Naive thymus-derived CD4-positive, alpha-beta T cell (primary cell): ENCODE measurements at regions of chr2 and their contacts with region 1.

Region 1: GRCh38 chr2:171416009-171416926 is 17.5 kb downstream of the METTL8 start:
- DNase-seq: peak; percentile 29 to 82 (median 75)
- ATAC-seq: peak; percentile 99
- H3K4me3 ChIP-seq: no peak overlapping the region
- H3K4me3 Mint-ChIP-seq: no peak overlapping the region
- H3K27ac ChIP-seq: no peak overlapping the region
- H3K27ac Mint-ChIP-seq: peak overlapping the region; percentile 4 to 74 (median 55)
- H3K4me1 ChIP-seq: no peaks in the 10 kb centered on the region
- H3K4me1 Mint-ChIP-seq: peaks cover 6 to 22% (median 7%) of the 10 kb centered on the region in 7 donors
- H3K27me3 ChIP-seq: no peaks in the 10 kb centered on the region
- H3K27me3 Mint-ChIP-seq: no peaks in the 10 kb centered on the region

Region 2: DNA sequence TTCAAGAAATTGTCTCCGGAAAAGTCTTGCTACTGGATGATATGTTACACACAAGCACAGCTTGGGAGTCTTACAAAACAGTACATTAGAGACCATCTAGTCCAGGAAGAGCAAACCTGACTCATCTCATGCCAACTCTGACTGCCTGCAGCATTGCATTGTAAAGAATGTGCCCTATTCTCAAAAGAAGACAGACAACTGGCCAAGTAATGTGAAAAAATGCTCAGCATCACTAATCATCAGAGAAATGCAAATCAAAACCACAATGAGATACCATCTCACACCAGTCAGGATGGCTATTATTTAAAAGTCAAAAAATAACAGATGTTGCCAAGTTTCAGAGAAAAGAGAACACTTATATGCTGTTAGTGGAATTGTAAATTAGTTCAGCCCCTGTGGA is 529.9 kb before region 1 on chr2:
- CTCF ChIA-PET with region 1: no interaction called
- POLR2A ChIA-PET with region 1: no interaction called
- intact Hi-C with region 1: no loop called
- DNase-seq: no peak
- ATAC-seq: no peak
- H3K4me3 ChIP-seq: no peak overlapping the region
- H3K4me3 Mint-ChIP-seq: no peak overlapping the region
- H3K27ac ChIP-seq: no peak overlapping the region
- H3K27ac Mint-ChIP-seq: no peak overlapping the region
- H3K4me1 ChIP-seq: no peaks in the 10 kb centered on the region
- H3K4me1 Mint-ChIP-seq: peaks cover 0 to 1% (median 0%) of the 10 kb centered on the region in 7 donors
- H3K27me3 ChIP-seq: no peaks in the 10 kb centered on the region
- H3K27me3 Mint-ChIP-seq: peaks cover 0 to 45% (median 11%) of the 10 kb centered on the region in 5 donors

Region 3: GRCh38 chr2:170966648-170967436 is 449.4 kb before region 1 on chr2:
- CTCF ChIA-PET with region 1: interaction called, 56 read pairs
- POLR2A ChIA-PET with region 1: interaction called, 4 read pairs
- intact Hi-C with region 1: loop called in 1 of 2 experiments (anchors 1 kb)
- DNase-seq: no peak
- ATAC-seq: peak; percentile 47
- H3K4me3 ChIP-seq: no peak overlapping the region
- H3K4me3 Mint-ChIP-seq: no peak overlapping the region
- H3K27ac ChIP-seq: no peak overlapping the region
- H3K27ac Mint-ChIP-seq: peak overlapping the region in 3 of 9 donors; percentile 8 to 42 (median 20)
- H3K4me1 ChIP-seq: no peaks in the 10 kb centered on the region
- H3K4me1 Mint-ChIP-seq: no peaks in the 10 kb centered on the region
- H3K27me3 ChIP-seq: no peaks in the 10 kb centered on the region
- H3K27me3 Mint-ChIP-seq: no peaks in the 10 kb centered on the region

Region 4: DNA sequence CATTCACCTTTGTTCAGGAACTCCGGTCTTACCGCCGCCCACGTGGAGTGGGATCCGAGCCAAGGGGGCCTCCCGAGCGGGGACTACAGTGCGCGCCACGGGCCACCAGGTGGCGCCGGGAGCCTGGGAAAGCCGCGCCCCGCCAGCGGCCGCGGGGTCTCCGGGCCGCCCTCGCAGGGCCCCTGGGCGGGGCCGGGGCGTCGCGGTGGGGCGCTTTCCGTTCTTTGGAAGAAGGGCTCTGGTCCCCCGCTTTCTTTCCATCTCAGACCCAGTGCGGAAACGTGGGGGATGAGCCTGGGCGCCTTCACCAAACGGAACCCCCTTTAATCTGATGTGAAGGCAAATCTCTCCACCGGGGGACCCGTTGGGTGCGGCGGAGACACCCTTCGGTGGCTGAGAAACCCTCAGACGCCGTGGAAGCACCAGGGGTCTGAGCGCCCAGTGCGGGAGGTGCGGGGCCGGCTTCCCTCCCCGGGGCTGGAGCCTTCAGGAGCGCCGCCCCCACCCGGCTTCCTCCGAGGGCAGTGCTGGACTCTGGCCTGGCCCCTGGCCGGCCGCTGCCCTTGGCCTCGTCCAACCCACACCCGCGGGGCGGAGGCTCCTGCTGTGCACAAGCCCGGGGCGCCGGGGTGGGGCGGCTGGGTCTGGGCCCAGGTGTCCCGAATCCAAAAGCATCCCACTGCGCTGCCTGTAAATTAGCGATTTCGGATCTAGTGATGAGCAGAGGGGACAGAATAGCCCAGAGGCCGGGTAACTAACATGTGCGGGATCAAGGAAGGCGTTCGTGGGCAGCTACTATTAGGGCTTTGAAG is 442.6 kb before region 1 on chr2:
- CTCF ChIA-PET with region 1: interaction called, 56 read pairs
- POLR2A ChIA-PET with region 1: interaction called, 14 read pairs
- intact Hi-C with region 1: loop called (anchors 1 kb)
- DNase-seq: peak; percentile 86 to 96 (median 91)
- ATAC-seq: peak; percentile 99
- H3K4me3 ChIP-seq: peak overlapping the region; percentile 84
- H3K4me3 Mint-ChIP-seq: peak overlapping the region; percentile 51 to 87 (median 84)
- H3K27ac ChIP-seq: peak overlapping the region; percentile 67
- H3K27ac Mint-ChIP-seq: peak overlapping the region; percentile 33 to 90 (median 79)
- H3K4me1 ChIP-seq: peaks cover 4 to 11% of the 10 kb centered on the region in 2 donors
- H3K4me1 Mint-ChIP-seq: peaks cover 5 to 20% (median 10%) of the 10 kb centered on the region in 7 donors
- H3K27me3 ChIP-seq: no peaks in the 10 kb centered on the region
- H3K27me3 Mint-ChIP-seq: no peaks in the 10 kb centered on the region

Region 5: GRCh38 chr2:171237751-171238505 is 178.3 kb before region 1 on chr2:
- CTCF ChIA-PET with region 1: no interaction called
- POLR2A ChIA-PET with region 1: no interaction called
- intact Hi-C with region 1: no loop called
- DNase-seq: no peak
- ATAC-seq: no peak
- H3K4me3 ChIP-seq: no peak overlapping the region
- H3K4me3 Mint-ChIP-seq: no peak overlapping the region
- H3K27ac ChIP-seq: no peak overlapping the region
- H3K27ac Mint-ChIP-seq: peak overlapping the region in 1 of 9 donors; percentile 30
- H3K4me1 ChIP-seq: no peaks in the 10 kb centered on the region
- H3K4me1 Mint-ChIP-seq: peaks cover 0 to 19% (median 8%) of the 10 kb centered on the region in 7 donors
- H3K27me3 ChIP-seq: no peaks in the 10 kb centered on the region
- H3K27me3 Mint-ChIP-seq: peaks cover 0 to 15% (median 0%) of the 10 kb centered on the region in 5 donors

Region 6: DNA sequence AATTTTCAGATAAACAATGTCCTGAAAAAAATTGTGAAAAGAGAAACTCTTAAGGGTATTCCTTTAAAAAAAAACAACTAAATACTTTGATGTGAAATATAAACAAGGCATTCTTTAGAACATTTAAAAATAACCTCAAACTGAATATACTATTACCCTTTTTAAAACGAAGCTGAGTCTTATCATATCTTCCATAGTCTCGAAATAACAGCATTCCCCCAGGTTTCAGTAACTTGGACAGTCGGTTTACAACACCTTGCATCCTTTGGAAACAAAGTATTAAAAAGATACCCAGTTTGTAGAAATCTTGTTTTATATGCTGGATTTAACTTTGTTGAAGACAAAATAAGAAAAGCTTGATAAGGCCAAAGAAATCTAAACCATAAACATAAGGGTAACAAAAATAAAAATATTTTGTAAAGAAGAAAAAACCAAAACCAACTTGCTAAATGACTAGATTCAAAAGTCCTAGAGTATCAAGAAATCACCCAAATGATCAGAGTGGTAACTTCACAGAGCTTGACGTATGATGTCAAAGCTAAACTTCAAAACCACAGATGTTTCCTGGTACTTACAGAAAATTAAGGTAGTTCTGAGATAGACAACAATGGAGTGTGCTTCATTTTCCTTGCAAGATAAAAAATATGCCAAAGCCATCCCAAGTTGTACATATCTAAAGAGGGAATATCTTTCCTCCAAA is 90.2 kb before region 1 on chr2:
- CTCF ChIA-PET with region 1: interaction called, 4 read pairs
- POLR2A ChIA-PET with region 1: no interaction called
- intact Hi-C with region 1: loop called in 1 of 2 experiments (anchors 5 kb)
- DNase-seq: peak in 7 of 9 donors; percentile 11 to 66 (median 41)
- ATAC-seq: peak; percentile 89
- H3K4me3 ChIP-seq: no peak overlapping the region
- H3K4me3 Mint-ChIP-seq: peak overlapping the region in 5 of 10 donors; percentile 4 to 56 (median 27)
- H3K27ac ChIP-seq: no peak overlapping the region
- H3K27ac Mint-ChIP-seq: peak overlapping the region in 8 of 9 donors; percentile 6 to 88 (median 70)
- H3K4me1 ChIP-seq: peaks cover 0 to 17% of the 10 kb centered on the region in 2 donors
- H3K4me1 Mint-ChIP-seq: peaks cover 16 to 41% (median 37%) of the 10 kb centered on the region in 7 donors
- H3K27me3 ChIP-seq: no peaks in the 10 kb centered on the region
- H3K27me3 Mint-ChIP-seq: no peaks in the 10 kb centered on the region